Posterior cingulate gyrus (tissue), 11 donors: ENCODE measurements at regions of chr1 and their contacts with region 1.

Region 1: DNA sequence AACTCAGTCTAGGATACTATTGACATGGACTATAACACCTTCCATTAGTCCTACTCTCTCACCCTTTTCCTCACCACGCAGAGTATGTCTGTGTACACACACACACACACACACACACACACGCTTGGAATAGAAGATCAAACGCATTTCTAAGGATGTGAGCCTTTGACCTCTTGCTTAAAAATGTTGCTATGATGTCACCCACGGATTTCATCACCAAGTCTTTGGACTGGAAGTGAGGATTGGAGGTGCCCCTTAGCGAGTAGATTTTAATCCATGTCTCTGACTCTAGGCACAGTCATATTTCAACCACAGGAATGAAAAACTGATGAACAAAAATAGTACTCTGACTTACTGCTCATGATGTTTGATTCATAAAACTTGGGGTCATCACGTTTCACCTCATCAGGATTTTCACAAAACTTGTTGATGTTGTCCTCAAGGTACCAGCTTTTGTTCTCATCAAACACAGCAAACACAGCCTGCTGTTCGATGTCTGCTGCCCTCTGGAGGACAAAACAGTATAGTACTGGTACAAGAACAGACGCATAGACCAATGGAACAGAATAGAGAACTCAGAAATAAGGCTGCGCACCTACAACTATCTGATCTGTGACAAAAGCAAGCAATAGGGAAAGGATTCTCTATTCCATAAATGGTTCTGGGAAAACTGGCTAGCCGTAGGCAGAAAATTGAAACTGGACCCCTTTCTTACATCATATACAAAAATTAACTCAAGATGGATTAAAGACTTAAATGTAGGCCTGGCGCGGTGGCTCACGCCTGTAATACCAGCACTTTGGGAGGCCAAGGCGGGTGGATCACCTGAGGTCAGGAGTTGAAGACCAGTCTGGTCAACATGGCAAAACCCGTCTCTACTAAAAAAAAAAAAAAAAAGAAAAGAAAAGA is 39.9 kb downstream of the F5 start:
- DNase-seq: peak in 8 of 10 donors; percentile 24 to 84 (median 60)

Region 2: GRCh38 chr1:168342572-168343280 is 1203.6 kb before region 1 on chr1:
- intact Hi-C with region 1: loop called (anchors 10 kb)
- DNase-seq: peak; percentile 79 to 98 (median 92)

Region 3: GRCh38 chr1:168439456-168440375 is 1106.6 kb before region 1 on chr1:
- intact Hi-C with region 1: loop called (anchors 5 kb)
- DNase-seq: peak; percentile 60 to 96 (median 77)

Region 4: GRCh38 chr1:169466259-169467230 is 79.8 kb before region 1 on chr1:
- intact Hi-C with region 1: loop called (anchors 1 kb)
- DNase-seq: no peak

Region 5: DNA sequence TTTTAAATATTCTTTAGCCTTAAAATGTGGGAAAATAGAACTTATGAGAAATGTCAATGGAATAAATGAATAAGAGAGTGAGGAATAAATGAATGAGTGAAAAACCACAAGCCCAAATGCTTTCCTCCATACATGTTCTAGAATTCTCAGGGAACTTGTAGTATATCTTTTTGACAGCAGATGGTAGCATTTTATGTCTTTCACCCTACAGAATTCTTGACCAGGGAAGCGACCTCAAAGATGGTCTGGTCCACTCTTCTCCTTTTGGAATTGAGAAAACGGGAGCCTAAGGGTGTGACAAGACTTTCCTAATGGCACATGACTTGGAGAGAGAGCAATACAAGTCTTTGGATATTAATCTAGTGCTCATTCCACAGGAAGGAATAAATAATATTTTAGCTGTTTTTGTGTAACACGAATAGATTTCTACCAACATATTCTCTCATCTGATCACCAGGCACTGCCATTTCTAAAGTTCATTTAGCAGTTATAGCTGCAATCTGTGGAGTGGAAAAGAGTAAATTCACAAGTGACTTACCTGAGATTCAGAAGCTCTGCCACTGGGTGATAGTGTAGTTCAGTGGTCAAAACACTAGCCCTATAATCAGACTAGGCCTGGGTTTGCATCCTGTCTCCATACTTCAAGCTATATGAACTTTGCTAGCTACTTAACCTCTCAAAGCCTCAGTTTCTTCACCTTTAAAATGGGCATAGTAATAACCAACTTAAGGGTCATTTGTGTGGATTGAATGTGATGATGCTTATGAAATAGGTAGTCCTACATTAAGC is 54.9 kb after region 1 on chr1:
- intact Hi-C with region 1: no loop called
- DNase-seq: no peak

Region 6: DNA sequence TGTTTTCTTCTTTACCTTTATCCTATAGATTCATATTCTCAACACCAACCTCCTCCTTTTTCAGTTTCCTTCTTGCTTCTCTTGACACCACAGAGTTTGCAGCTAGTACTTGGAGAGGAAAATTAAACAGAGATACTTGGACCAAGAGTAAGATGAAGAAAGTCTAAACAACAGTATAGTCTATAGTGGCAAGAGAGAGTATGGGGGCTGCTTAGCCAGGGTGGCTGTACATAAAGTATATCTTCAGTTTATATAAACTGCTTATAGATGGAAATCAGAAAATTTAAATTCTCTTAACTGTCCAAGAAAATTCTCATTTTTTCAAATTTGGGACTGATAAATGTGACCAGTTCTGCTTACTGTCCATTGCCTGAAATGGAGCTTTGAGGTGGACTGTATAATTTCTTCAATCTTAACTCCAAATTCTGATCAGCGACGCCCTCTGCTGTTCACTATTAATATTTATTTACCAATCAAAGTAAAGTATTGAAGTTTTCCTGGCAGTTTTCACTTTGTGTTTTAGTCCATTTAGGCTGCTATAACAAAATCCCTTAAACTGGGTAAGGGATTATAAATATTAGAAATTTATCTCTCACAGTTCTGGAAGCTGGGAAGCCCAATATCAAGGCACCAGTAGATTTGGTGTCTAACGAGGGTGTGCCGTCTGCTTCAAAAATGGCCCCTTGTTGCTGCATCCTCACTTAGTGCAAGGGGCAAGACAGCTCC is 263.2 kb after region 1 on chr1:
- intact Hi-C with region 1: loop called (anchors 5 kb)
- DNase-seq: no peak